ENCODE measurements at regions of chr11 and their contacts with region 1.

Region 1: GRCh38 chr11:128157423-128158298 is 429.7 kb downstream of the ETS1 start:
- DNase-seq: peak; percentile 51
- ATAC-seq: peak; percentile 94
- H3K4me3 ChIP-seq: no peak overlapping the region
- H3K27ac ChIP-seq: no peak overlapping the region
- H3K4me1 ChIP-seq: no peaks in the 10 kb centered on the region
- H3K27me3 ChIP-seq: peaks cover 2 to 3% of the 10 kb centered on the region in 2 experiments; a peak in 2 of 4 replicates
- CTCF ChIP-seq: peak; percentile 58 to 92 (median 73)
- EP300 ChIP-seq: no peak
- POLR2A ChIP-seq: no peak
- RAD21 ChIP-seq: peak; percentile 61

Region 2: GRCh38 chr11:127859941-127860354 is 297.7 kb before region 1 on chr11:
- CTCF ChIA-PET with region 1: no interaction called
- POLR2A ChIA-PET with region 1: no interaction called
- RAD21 ChIA-PET with region 1: no interaction called
- SMC1A ChIA-PET with region 1: no interaction called
- in situ Hi-C with region 1: no loop called
- intact Hi-C with region 1: no loop called
- DNase-seq: no peak
- ATAC-seq: no peak
- H3K4me3 ChIP-seq: no peak overlapping the region
- H3K27ac ChIP-seq: no peak overlapping the region
- H3K4me1 ChIP-seq: no peaks in the 10 kb centered on the region
- H3K27me3 ChIP-seq: no peaks in the 10 kb centered on the region
- CTCF ChIP-seq: no peak
- EP300 ChIP-seq: no peak
- POLR2A ChIP-seq: no peak
- RAD21 ChIP-seq: no peak

Region 3: GRCh38 chr11:128130052-128130451 is 27.6 kb before region 1 on chr11:
- CTCF ChIA-PET with region 1: interaction called, 8 read pairs
- POLR2A ChIA-PET with region 1: no interaction called
- RAD21 ChIA-PET with region 1: no interaction called
- SMC1A ChIA-PET with region 1: interaction called, 10 read pairs
- in situ Hi-C with region 1: no loop called
- intact Hi-C with region 1: no loop called
- DNase-seq: no peak
- ATAC-seq: no peak
- H3K4me3 ChIP-seq: no peak overlapping the region
- H3K27ac ChIP-seq: no peak overlapping the region
- H3K4me1 ChIP-seq: no peaks in the 10 kb centered on the region
- H3K27me3 ChIP-seq: no peaks in the 10 kb centered on the region
- CTCF ChIP-seq: no peak
- EP300 ChIP-seq: no peak
- POLR2A ChIP-seq: no peak
- RAD21 ChIP-seq: no peak

Region 4: DNA sequence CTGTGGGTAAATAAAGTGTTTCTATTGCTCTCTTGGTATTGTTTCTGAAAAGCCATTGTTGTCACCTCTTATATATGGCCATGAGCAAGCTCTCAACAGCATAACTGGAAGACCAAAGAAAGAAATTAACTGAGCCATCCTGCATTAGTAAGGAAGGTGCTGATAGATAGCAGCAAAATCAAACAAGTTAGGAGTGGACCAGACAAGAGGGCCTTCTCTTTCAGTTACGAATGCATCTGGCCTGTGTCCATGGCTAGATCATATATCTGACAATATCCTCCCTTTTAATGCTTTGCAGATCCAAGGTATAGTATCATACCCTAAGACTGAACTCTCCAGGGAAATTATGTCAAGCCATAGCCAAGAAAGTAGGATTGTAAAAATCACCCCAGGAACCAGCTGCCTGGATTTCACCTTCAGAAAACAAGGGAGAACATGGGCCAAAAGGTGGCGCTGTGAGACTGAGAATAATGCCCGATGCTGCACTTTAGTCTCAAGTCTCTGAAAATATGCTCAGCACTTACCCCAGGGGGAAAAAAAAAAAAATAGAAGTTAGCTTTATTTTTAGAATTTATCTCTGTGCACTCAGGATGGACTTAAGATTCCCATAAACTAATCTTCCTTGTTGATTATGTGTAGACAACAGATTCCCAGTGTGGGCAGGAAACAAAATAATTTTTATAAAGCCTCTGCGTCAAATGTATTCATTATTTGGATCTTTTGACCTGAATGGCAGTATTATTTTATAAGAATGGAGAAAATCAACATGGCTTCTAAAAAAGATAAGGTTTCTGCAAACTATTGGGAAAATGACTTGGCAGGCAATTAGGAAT is 14.6 kb after region 1 on chr11:
- CTCF ChIA-PET with region 1: interaction called, 119 read pairs
- POLR2A ChIA-PET with region 1: no interaction called
- RAD21 ChIA-PET with region 1: interaction called, 12 read pairs
- SMC1A ChIA-PET with region 1: interaction called, 30 read pairs
- in situ Hi-C with region 1: no loop called
- intact Hi-C with region 1: no loop called
- DNase-seq: peak; percentile 38
- ATAC-seq: peak; percentile 93
- H3K4me3 ChIP-seq: no peak overlapping the region
- H3K27ac ChIP-seq: no peak overlapping the region
- H3K4me1 ChIP-seq: no peaks in the 10 kb centered on the region
- H3K27me3 ChIP-seq: no peaks in the 10 kb centered on the region; a peak in 2 of 4 replicates
- CTCF ChIP-seq: peak; percentile 68 to 91 (median 72)
- EP300 ChIP-seq: no peak
- POLR2A ChIP-seq: no peak
- RAD21 ChIP-seq: peak; percentile 97

Region 5: GRCh38 chr11:128279866-128280265 is 122.2 kb after region 1 on chr11:
- CTCF ChIA-PET with region 1: interaction called, 11 read pairs
- POLR2A ChIA-PET with region 1: no interaction called
- RAD21 ChIA-PET with region 1: interaction called, 3 read pairs
- SMC1A ChIA-PET with region 1: no interaction called
- in situ Hi-C with region 1: no loop called
- intact Hi-C with region 1: no loop called
- DNase-seq: no peak
- ATAC-seq: no peak
- H3K4me3 ChIP-seq: no peak overlapping the region
- H3K27ac ChIP-seq: no peak overlapping the region
- H3K4me1 ChIP-seq: no peaks in the 10 kb centered on the region
- H3K27me3 ChIP-seq: peaks cover 4% of the 10 kb centered on the region in 2 experiments; a peak in 3 of 4 replicates
- CTCF ChIP-seq: no peak
- EP300 ChIP-seq: no peak
- POLR2A ChIP-seq: no peak
- RAD21 ChIP-seq: no peak

Region 6: DNA sequence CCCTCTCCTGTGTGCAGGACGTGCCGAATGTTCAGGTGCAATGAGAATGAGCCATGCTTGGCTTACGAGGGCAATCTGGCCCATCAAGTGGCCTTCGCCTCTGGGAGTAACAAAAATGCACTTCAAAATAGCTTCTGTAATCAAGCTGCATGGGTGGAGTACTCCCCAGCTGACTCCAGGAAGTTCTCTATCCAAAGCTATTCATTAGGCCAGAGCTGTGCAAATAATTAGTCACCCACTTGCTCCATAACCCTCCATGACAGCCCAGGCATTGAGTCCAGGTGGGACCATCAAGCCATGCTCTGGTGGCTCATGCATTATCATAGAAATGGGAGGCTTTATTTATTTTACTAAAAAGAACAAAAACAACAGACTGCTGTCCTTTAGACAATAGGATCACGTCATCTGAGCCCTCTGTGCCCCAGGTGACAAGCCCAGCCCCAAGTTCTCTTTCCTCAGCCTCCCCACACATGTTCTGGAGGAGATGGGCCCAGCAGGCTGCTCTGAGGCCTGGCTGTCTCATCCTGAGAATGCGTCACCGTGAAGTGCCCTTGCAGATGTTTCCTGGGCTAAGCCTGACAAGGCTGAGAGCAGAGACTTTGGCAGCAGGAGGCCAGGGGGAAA is 185.0 kb after region 1 on chr11:
- CTCF ChIA-PET with region 1: no interaction called
- POLR2A ChIA-PET with region 1: no interaction called
- RAD21 ChIA-PET with region 1: no interaction called
- SMC1A ChIA-PET with region 1: no interaction called
- in situ Hi-C with region 1: no loop called
- intact Hi-C with region 1: no loop called
- DNase-seq: peak; percentile 39
- ATAC-seq: peak; percentile 94
- H3K4me3 ChIP-seq: no peak overlapping the region
- H3K27ac ChIP-seq: no peak overlapping the region
- H3K4me1 ChIP-seq: peaks cover 19% of the 10 kb centered on the region
- H3K27me3 ChIP-seq: no peaks in the 10 kb centered on the region
- CTCF ChIP-seq: no peak
- EP300 ChIP-seq: no peak
- POLR2A ChIP-seq: no peak
- RAD21 ChIP-seq: 0 out of 2 replicates have a peak, but pooled peaks have one; percentile 12

Region 7: GRCh38 chr11:128848815-128849455 is 691.3 kb after region 1 on chr11:
- CTCF ChIA-PET with region 1: interaction called, 23 read pairs
- POLR2A ChIA-PET with region 1: no interaction called
- RAD21 ChIA-PET with region 1: no interaction called
- SMC1A ChIA-PET with region 1: interaction called, 6 read pairs
- in situ Hi-C with region 1: no loop called
- intact Hi-C with region 1: loop called (anchors 5 kb)
- DNase-seq: no peak
- ATAC-seq: peak; percentile 100
- H3K4me3 ChIP-seq: no peak overlapping the region
- H3K27ac ChIP-seq: no peak overlapping the region
- H3K4me1 ChIP-seq: peaks cover 4% of the 10 kb centered on the region; the same call in 1 of the 2 replicates
- H3K27me3 ChIP-seq: no peaks in the 10 kb centered on the region
- CTCF ChIP-seq: peak; percentile 81 to 91 (median 88)
- EP300 ChIP-seq: no peak
- POLR2A ChIP-seq: no peak
- RAD21 ChIP-seq: peak; percentile 68

Region 8: GRCh38 chr11:128956401-128957201 is 798.9 kb after region 1 on chr11:
- CTCF ChIA-PET with region 1: interaction called, 11 read pairs
- POLR2A ChIA-PET with region 1: no interaction called
- RAD21 ChIA-PET with region 1: interaction called, 4 read pairs
- SMC1A ChIA-PET with region 1: no interaction called
- in situ Hi-C with region 1: no loop called
- intact Hi-C with region 1: no loop called
- DNase-seq: peak; percentile 45
- ATAC-seq: peak; percentile 90
- H3K4me3 ChIP-seq: no peak overlapping the region
- H3K27ac ChIP-seq: no peak overlapping the region
- H3K4me1 ChIP-seq: no peaks in the 10 kb centered on the region
- H3K27me3 ChIP-seq: peaks cover 0 to 6% of the 10 kb centered on the region in 2 experiments; a peak in 1 of 4 replicates
- CTCF ChIP-seq: peak; percentile 65 to 79 (median 76)
- EP300 ChIP-seq: no peak
- POLR2A ChIP-seq: no peak
- RAD21 ChIP-seq: peak; percentile 78